Esophagus muscularis mucosa (tissue), 4 donors: ENCODE measurements at regions of chr12 and their contacts with region 1.

Region 1: DNA sequence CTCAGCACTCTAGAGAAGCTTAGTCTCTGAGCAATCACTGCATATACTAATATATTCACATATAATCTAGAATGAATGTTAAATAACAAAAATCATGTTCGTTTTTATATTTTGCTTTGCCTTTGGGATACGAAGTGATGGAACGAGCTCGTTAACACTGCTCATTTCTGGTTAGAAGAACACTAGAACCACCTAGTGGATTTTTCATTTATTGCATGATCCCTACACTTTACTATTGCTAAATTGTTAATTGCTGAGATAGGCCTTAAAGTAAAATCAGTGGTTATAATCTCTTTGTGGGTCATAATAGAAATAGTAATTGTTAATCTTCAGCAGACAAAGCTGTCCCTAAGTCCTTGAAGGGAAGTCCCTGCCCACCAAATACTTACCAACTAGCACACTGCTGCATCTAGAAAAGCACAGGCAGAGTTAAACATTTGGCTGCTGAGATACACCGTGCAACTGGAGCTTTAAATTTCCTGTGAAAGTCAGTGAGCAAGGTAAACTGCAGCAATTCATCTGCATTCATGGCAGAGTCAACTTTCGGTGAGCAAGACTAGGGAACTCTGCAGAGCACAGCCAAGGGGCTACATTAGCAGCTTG is 353.7 kb downstream of the APAF1 start:
- DNase-seq: no peak
- H3K4me3 ChIP-seq: no peak overlapping the region
- H3K27ac ChIP-seq: no peak overlapping the region
- H3K4me1 ChIP-seq: peaks cover 0 to 8% (median 3%) of the 10 kb centered on the region in 4 donors
- H3K27me3 ChIP-seq: no peaks in the 10 kb centered on the region
- CTCF ChIP-seq: peak; percentile 63 to 76 (median 68)
- EP300 ChIP-seq: no peak
- POLR2A ChIP-seq: no peak

Region 2: DNA sequence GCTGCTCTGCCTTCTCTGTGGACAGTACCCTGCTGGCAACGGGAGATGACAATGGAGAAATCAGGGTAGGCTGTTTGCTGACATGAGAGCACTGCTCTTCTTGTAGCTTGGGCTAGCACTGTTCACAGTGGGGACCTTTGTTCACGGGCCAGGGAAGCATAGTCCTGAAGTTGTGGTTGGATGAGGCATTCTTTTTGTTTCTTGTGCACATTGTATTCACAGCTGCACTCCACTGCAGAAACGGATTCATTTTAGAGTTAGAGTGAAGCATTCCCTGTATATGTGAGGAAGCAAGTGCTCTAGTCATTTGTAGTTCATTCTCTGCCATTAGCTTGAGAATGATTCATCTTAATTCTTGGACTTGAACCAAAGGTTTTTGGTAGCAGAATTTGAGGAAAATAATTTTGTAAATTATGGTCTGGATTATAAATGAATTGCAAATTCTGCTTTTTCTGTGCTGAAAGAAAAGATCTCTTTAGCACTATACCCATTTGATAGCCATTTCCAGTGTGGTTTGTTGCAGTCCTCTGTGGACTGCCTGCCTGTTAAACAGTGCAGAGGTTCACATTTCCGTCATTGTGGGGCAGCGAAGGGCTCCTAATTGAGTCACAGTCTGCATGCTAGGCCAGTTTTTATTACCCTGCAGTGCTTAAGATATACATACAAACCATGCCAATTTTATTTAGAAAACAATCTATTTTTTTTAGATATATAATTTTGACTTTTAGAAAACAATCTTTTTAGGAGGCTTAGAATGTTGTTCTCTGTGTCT is 273.1 kb before region 1 on chr12:
- intact Hi-C with region 1: loop called (anchors 10 kb)
- DNase-seq: no peak
- H3K4me3 ChIP-seq: no peak overlapping the region
- H3K27ac ChIP-seq: no peak overlapping the region
- H3K4me1 ChIP-seq: peaks cover 0 to 7% (median 2%) of the 10 kb centered on the region in 4 donors
- H3K27me3 ChIP-seq: no peaks in the 10 kb centered on the region
- CTCF ChIP-seq: peak in 2 of 3 experiments; percentile 11 to 18
- EP300 ChIP-seq: no peak
- POLR2A ChIP-seq: no peak

Region 3: DNA sequence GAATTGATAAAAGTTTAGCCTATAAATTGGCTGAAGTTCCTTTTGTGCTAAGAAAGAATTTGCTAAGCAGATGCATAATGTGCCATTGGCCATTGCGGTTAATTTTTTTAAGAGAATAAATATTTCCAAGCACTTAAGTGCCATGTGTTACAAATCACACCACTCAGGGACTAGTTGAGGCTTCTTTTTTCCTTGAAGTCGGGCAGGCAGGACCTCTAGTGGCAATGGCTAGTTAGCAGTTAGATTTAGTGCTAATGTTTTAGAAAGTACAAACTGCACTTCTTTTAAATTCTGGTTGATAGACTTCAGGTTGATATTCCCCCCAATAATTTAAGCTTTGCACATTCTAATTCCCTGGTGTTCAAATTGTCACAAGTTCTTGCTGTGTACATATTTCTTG is 59.4 kb before region 1 on chr12:
- intact Hi-C with region 1: no loop called
- DNase-seq: no peak
- H3K4me3 ChIP-seq: no peak overlapping the region
- H3K27ac ChIP-seq: no peak overlapping the region
- H3K4me1 ChIP-seq: no peaks in the 10 kb centered on the region
- H3K27me3 ChIP-seq: no peaks in the 10 kb centered on the region
- CTCF ChIP-seq: peak in 1 of 3 experiments; percentile 12
- EP300 ChIP-seq: no peak
- POLR2A ChIP-seq: no peak